IMR-90 (cell line): ENCODE measurements at regions of chr1 and their contacts with region 1.

Region 1: GRCh38 chr1:238107322-238107721 is 216.6 kb upstream of the ZP4 start:
- DNase-seq: peak; percentile 19
- ATAC-seq: peak; percentile 92
- H3K4me3 ChIP-seq: no peak overlapping the region
- H3K27ac ChIP-seq: peak overlapping the region; percentile 70; the same call in 1 of the 2 replicates
- H3K4me1 ChIP-seq: no peaks in the 10 kb centered on the region
- H3K27me3 ChIP-seq: no peaks in the 10 kb centered on the region
- CTCF ChIP-seq: no peak
- POLR2A ChIP-seq: no peak
- RAD21 ChIP-seq: no peak

Region 2: DNA sequence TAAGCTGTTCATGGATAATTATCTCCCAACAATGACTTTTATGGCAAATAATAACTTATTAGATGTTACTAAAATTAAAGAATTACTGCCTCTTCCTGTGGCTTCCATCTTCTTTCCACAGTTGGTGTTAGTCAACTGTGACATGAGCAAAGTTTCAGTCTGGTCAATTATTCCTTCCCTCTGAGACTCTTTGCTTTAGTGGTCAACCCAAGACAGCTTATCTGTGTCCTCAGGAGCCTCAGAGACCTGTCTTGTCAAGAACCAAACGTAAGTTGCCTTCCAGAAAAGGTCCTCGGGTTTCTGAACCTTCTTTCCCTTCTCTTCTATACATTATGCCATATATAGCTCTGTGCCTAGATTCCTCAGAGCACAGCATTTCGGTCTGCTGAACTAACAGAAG is 46.6 kb after region 1 on chr1:
- CTCF ChIA-PET with region 1: no interaction called
- POLR2A ChIA-PET with region 1: no interaction called
- dilution Hi-C with region 1: no loop called
- in situ Hi-C with region 1: no loop called
- intact Hi-C with region 1: loop called (anchors 1 kb)
- DNase-seq: no peak
- ATAC-seq: no peak
- H3K4me3 ChIP-seq: no peak overlapping the region
- H3K27ac ChIP-seq: no peak overlapping the region
- H3K4me1 ChIP-seq: no peaks in the 10 kb centered on the region
- H3K27me3 ChIP-seq: no peaks in the 10 kb centered on the region
- CTCF ChIP-seq: no peak
- POLR2A ChIP-seq: no peak
- RAD21 ChIP-seq: no peak